ENCODE measurements at regions of chr1 and their contacts with region 1.

Region 1: DNA sequence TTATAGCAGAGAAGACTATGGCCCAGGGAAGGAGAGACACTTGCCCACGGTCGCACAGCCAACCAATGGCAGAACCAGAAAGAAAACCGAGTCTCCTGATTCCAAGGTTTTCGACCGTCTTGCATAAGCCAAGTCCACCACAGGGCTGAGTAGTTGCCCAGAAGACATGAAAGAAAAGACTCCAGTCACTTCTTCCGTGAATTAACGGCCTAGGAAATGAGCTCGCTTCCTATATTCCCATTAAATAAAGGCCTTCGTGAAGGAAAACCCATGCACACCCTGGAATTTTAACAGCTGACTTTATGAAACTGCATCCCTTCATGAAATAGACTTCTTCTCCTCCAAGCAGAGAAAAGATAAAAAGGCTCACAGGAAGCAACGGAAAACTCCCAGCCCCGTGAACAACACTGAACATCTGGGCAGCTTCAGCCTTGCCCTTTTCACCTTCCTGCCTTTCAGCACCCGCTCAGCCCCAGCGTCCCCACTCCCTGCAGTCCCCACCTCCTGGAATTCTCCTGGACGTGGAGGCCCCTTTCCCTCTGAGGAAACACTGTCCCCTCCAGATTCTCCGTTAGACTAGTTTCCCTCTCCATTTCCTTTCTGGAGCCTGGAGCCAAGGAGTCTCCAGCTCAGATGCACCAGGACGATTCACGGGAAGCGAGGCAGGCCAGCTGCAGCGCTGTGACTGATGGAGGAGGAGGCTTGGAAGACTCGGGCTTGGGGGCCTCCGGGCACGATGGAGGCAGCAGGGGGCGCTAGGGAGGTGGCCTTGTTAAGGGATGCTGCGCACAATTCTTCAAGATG is 2.7 kb upstream of the MYOC start:
- DNase-seq: peak; percentile 72
- H3K4me3 ChIP-seq: no peak overlapping the region
- H3K27ac ChIP-seq: peak overlapping the region; percentile 63
- H3K4me1 ChIP-seq: peaks cover 17% of the 10 kb centered on the region
- H3K27me3 ChIP-seq: peaks cover 0 to 6% of the 10 kb centered on the region in 2 experiments
- CTCF ChIP-seq: peak; percentile 86 to 95
- POLR2A ChIP-seq: no peak

Region 2: DNA sequence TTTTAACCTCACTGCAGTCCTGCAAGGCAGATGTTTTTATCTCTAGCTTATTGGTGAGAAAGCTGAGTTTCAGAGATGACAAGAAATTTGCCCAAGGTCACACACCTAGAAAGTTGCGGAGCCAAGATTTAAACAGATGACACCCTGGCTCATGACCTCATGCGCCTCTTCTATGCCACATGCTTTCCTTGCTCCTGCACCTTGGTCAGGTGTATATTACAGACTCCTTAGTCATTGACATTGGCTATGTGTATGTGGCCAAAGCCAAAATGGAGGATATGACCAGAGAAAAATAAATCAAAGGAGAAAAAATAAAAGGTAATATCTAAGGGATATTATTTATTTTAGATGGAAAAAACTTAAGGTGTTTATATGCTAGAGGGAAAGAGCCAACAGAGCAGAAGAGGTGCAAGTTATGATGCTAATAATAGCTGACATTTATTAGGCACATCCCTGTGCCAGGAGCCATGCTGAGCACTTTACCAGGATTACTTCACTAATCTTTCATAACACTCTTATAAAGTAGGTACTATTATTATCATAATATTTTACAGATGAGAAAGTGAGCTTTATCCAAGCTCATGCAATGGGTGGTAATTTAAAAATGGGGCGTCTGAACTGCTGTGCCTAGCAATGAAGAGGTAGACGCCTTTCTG is 11.1 kb after region 1 on chr1:
- CTCF ChIA-PET with region 1: interaction called, 16 read pairs
- POLR2A ChIA-PET with region 1: no interaction called
- dilution Hi-C with region 1: no loop called
- intact Hi-C with region 1: no loop called
- DNase-seq: no peak
- H3K4me3 ChIP-seq: no peak overlapping the region
- H3K27ac ChIP-seq: no peak overlapping the region
- H3K4me1 ChIP-seq: no peaks in the 10 kb centered on the region
- H3K27me3 ChIP-seq: peaks cover 0 to 1% of the 10 kb centered on the region in 2 experiments
- CTCF ChIP-seq: no peak
- POLR2A ChIP-seq: no peak

Region 3: GRCh38 chr1:171741872-171742576 is 86.9 kb after region 1 on chr1 and contains the start of gene VAMP4:
- CTCF ChIA-PET with region 1: interaction called, 3 read pairs
- POLR2A ChIA-PET with region 1: no interaction called
- dilution Hi-C with region 1: no loop called
- intact Hi-C with region 1: loop called (anchors 1 kb)
- DNase-seq: peak; percentile 87
- H3K4me3 ChIP-seq: peak within 1 kb of the TSS; percentile 59 to 83 (median 81)
- H3K27ac ChIP-seq: peak within 1 kb of the TSS; percentile 57
- H3K4me1 ChIP-seq: peaks cover 31% of the 10 kb centered on the region
- H3K27me3 ChIP-seq: no peaks in the 10 kb centered on the region
- CTCF ChIP-seq: no peak
- POLR2A ChIP-seq: peak; percentile 60
- total RNA-seq, gene VAMP4: 10.1 and 10.4 TPM in 2 replicates

Region 4: DNA sequence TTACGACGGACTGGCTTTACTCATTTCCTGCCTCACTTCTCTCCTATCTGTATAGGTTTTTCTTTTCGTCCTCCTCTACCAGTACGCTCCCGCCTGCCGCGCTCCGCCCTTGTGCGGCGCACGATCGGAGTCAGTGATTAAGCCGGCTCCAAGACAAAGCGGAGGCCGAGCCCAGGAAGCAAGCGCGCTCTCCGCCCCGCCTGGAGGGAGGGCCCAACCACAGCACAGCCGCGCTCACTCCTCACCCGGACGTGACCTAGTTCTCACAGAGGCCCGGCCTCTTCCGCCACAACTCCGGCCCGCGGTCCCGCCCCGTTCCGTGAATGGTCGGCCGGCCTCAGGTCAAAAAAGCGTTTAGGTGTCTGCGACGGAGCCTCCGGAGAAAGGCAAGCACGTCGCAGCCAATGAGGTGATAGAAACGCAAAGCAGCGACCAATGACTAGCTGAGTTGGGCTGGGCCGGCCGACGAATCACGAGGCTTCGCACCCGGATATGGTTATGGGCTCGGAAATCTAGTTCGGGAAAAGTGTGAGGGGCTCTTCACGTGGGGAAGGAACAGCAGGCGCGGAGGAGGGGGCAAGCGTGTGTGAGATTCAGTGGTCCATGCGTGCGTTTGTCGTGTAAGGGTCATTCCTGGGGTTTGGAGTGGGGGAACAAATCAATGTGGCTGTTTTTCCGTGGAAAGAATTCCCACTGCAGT is 126.2 kb after region 1 on chr1 and contains the start of gene METTL13:
- CTCF ChIA-PET with region 1: no interaction called
- POLR2A ChIA-PET with region 1: no interaction called
- dilution Hi-C with region 1: no loop called
- intact Hi-C with region 1: loop called (anchors 1 kb)
- DNase-seq: peak; percentile 100
- H3K4me3 ChIP-seq: peak within 1 kb of the TSS; percentile 69 to 85 (median 81)
- H3K27ac ChIP-seq: peak within 1 kb of the TSS; percentile 66
- H3K4me1 ChIP-seq: peaks cover 7% of the 10 kb centered on the region
- H3K27me3 ChIP-seq: peaks cover 0 to 1% of the 10 kb centered on the region in 2 experiments
- CTCF ChIP-seq: no peak
- POLR2A ChIP-seq: peak; percentile 65
- total RNA-seq, gene METTL13: 26.5 and 29.7 TPM in 2 replicates

Measured in endothelial cell of umbilical vein (primary cell).